GM12878 (cell line): ENCODE measurements at regions of chr9 and their contacts with region 1.

Region 1: DNA sequence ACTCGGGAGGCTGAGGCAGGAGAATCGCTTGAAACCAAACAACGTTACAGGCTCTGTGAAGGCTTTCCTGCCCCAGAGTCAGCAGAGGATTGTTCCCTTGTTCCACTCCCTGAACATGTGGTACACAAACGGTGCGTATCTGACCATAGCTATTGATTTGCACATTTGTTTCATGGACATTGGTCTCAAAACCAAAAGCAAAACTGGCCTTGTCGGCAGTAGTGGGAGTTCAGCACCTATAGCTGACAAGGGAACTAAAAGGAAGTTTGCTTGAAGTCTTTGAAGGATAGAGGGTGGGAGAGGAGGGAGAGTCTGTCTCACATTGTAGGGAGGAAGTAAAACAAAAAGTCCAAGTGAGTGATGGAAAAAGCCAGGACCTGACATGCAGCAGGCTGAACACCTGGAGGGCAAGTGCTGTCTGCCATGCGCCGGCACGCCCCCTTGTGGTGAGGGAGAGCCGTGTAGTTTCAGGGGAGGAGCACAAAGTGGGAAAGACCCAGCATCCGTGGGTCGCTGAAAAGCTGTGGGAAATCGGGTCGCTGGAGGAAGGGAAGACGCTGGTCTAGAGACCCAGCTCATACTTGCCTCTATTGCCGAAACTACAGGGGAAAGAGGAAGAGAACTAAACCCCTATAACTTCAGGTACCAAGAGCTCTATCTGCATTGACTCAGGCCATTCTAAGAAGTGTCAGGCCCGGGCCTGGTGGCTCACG is 58.0 kb downstream of the RAD23B start:
- DNase-seq: peak; percentile 57
- ATAC-seq: peak; percentile 92
- H3K4me3 ChIP-seq: no peak overlapping the region
- H3K27ac ChIP-seq: no peak overlapping the region
- H3K4me1 ChIP-seq: peaks cover 4% of the 10 kb centered on the region; the same call in 1 of the 2 replicates
- H3K27me3 ChIP-seq: no peaks in the 10 kb centered on the region
- CTCF ChIP-seq: peak; percentile 93 to 96 (median 95); a peak in 5 of 6 replicates
- EP300 ChIP-seq: no peak
- POLR2A ChIP-seq: peak; percentile 39; the same call in 1 of the 2 replicates
- RAD21 ChIP-seq: peak; percentile 81

Region 2: GRCh38 chr9:107158321-107158720 is 182.8 kb before region 1 on chr9:
- CTCF ChIA-PET with region 1: interaction called, 56 read pairs
- POLR2A ChIA-PET with region 1: interaction called, 4 read pairs
- RAD21 ChIA-PET with region 1: interaction called, 31 read pairs
- SMC1A ChIA-PET with region 1: interaction called, 63 read pairs
- in situ Hi-C with region 1: no loop called
- intact Hi-C with region 1: loop called (anchors 1 kb)
- DNase-seq: no peak
- ATAC-seq: peak; percentile 99
- H3K4me3 ChIP-seq: no peak overlapping the region
- H3K27ac ChIP-seq: no peak overlapping the region
- H3K4me1 ChIP-seq: no peaks in the 10 kb centered on the region
- H3K27me3 ChIP-seq: peaks cover 0 to 3% of the 10 kb centered on the region in 2 experiments; a peak in 1 of 4 replicates
- CTCF ChIP-seq: peak; percentile 41 to 62 (median 56); a peak in 5 of 6 replicates
- EP300 ChIP-seq: no peak
- POLR2A ChIP-seq: no peak
- RAD21 ChIP-seq: peak; percentile 45

Region 3: DNA sequence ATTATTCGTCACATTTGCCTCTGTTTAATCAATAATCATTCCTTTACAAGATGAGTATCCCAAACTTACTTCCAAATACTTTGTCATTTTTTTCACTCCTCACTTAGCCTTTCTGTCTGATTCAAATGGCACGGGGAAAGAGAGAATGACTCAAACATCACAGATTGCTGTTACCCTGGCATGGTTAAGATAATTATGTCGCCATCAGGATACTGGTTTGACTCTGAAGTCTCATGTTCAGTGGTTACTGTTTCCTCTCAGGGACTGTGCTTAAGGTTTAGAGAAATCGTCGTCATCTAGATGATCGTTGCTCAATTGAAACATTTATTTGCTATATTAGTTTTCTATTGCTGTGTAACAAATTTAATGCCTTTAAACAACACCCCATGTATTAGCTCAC is 103.2 kb before region 1 on chr9:
- CTCF ChIA-PET with region 1: interaction called, 149 read pairs
- POLR2A ChIA-PET with region 1: no interaction called
- RAD21 ChIA-PET with region 1: interaction called, 28 read pairs
- SMC1A ChIA-PET with region 1: interaction called, 47 read pairs
- in situ Hi-C with region 1: no loop called
- intact Hi-C with region 1: loop called (anchors 2 kb)
- DNase-seq: no peak
- ATAC-seq: peak; percentile 69
- H3K4me3 ChIP-seq: no peak overlapping the region
- H3K27ac ChIP-seq: no peak overlapping the region
- H3K4me1 ChIP-seq: no peaks in the 10 kb centered on the region
- H3K27me3 ChIP-seq: no peaks in the 10 kb centered on the region
- CTCF ChIP-seq: no peak
- EP300 ChIP-seq: no peak
- POLR2A ChIP-seq: no peak
- RAD21 ChIP-seq: no peak

Region 4: GRCh38 chr9:107269681-107270080 is 71.4 kb before region 1 on chr9:
- CTCF ChIA-PET with region 1: interaction called, 8 read pairs
- POLR2A ChIA-PET with region 1: no interaction called
- RAD21 ChIA-PET with region 1: interaction called, 10 read pairs
- SMC1A ChIA-PET with region 1: interaction called, 7 read pairs
- in situ Hi-C with region 1: no loop called
- intact Hi-C with region 1: no loop called
- DNase-seq: no peak
- ATAC-seq: no peak
- H3K4me3 ChIP-seq: no peak overlapping the region
- H3K27ac ChIP-seq: no peak overlapping the region
- H3K4me1 ChIP-seq: no peaks in the 10 kb centered on the region; the same call in 1 of the 2 replicates
- H3K27me3 ChIP-seq: no peaks in the 10 kb centered on the region
- CTCF ChIP-seq: no peak
- EP300 ChIP-seq: no peak
- POLR2A ChIP-seq: no peak
- RAD21 ChIP-seq: no peak

Region 5: GRCh38 chr9:107309271-107309670 is 31.8 kb before region 1 on chr9:
- CTCF ChIA-PET with region 1: interaction called, 11 read pairs
- POLR2A ChIA-PET with region 1: no interaction called
- RAD21 ChIA-PET with region 1: interaction called, 3 read pairs
- SMC1A ChIA-PET with region 1: interaction called, 6 read pairs
- in situ Hi-C with region 1: no loop called
- intact Hi-C with region 1: no loop called
- DNase-seq: peak; percentile 25
- ATAC-seq: peak; percentile 77
- H3K4me3 ChIP-seq: no peak overlapping the region
- H3K27ac ChIP-seq: no peak overlapping the region
- H3K4me1 ChIP-seq: 0 out of 2 replicates have a peak, but pooled peaks cover 4% of the 10 kb centered on the region
- H3K27me3 ChIP-seq: no peaks in the 10 kb centered on the region
- CTCF ChIP-seq: no peak
- EP300 ChIP-seq: peak in 1 of 2 experiments; percentile 63; a peak in 1 of 4 replicates
- POLR2A ChIP-seq: no peak
- RAD21 ChIP-seq: no peak